Caki2 (cell line): ENCODE measurements at regions of chr3 and their contacts with region 1.

Region 1: DNA sequence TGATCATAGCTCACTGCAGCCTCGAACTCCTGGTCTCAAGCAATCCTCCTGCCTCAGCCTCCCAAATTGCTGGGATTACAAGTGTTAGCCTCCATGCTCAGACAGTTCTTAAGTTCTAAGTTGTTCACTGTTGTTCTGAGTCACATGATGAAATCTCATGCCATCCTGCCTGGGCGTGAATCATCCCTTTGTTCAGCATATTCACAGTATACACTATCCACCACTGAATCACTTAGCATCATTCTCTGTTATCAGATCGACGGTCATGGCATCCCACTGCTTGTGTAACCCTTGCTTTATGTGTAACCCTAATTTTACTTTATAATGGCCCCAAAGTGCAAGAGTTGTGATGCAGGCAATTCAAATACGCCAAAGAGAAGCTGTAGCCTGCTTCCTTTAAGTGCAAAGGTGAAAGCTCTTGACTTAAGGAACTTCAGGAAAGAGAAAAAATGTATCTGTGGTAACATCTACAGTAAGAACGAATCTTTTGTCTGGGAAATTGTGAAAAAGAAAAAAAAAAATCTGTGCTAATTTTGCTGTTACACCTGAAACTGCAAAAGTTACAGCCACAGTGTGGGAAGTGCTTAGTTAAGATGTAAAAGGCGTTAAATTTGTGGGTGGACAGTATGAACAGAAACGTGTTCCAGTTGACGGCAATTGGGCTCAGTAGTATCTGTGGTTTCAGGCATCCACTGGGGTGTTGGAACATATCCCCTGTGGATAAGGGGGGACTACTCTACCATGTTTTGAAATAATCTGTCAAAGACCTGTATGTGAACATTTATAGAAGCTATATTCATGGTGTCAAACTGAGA is 80.6 kb downstream of the PCOLCE2 start:
- DNase-seq: peak; percentile 55

Region 2: GRCh38 chr3:142578327-142579223 is 229.7 kb before region 1 on chr3 and contains the start of gene ATR:
- in situ Hi-C with region 1: loop called (anchors 25 kb)
- DNase-seq: peak; percentile 94
- total RNA-seq, gene ATR: 7.6 and 8.9 TPM in 2 replicates

Region 3: GRCh38 chr3:143207338-143207961 is 399.1 kb after region 1 on chr3:
- in situ Hi-C with region 1: no loop called
- DNase-seq: peak; percentile 96